ENCODE measurements at regions of chr17 and their contacts with region 1.

Region 1: GRCh38 chr17:2386400-2387085 is 14.3 kb downstream of the MNT start:
- DNase-seq: no peak
- H3K4me3 Mint-ChIP-seq: no peak overlapping the region
- H3K27ac Mint-ChIP-seq: no peak overlapping the region
- H3K4me1 Mint-ChIP-seq: peaks cover 24% of the 10 kb centered on the region
- H3K27me3 Mint-ChIP-seq: no peaks in the 10 kb centered on the region

Region 2: DNA sequence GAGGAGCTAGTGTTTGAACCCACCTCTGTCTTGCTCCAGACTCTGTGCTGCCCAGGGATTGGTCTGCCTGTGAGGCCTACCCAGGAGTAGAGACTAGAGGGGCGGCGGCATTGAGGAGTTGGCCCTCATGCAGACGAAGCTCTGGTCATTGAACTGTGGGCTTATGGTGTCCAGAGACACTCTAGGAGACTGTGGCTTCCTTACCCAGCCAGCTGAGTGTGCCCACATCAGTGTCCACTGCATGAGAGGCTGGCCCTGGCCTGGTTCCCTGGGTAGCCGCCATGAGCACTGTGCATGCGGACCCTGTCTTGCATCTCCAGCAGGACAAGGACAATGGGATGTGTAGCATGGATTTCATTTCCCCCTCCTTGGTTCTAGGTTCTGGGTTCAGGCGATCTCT is 35.3 kb before region 1 on chr17:
- CTCF ChIA-PET with region 1: interaction called, 11 read pairs
- POLR2A ChIA-PET with region 1: no interaction called
- intact Hi-C with region 1: no loop called
- DNase-seq: no peak
- H3K4me3 Mint-ChIP-seq: no peak overlapping the region
- H3K27ac Mint-ChIP-seq: no peak overlapping the region
- H3K4me1 Mint-ChIP-seq: peaks cover 17% of the 10 kb centered on the region
- H3K27me3 Mint-ChIP-seq: no peaks in the 10 kb centered on the region

Region 3: DNA sequence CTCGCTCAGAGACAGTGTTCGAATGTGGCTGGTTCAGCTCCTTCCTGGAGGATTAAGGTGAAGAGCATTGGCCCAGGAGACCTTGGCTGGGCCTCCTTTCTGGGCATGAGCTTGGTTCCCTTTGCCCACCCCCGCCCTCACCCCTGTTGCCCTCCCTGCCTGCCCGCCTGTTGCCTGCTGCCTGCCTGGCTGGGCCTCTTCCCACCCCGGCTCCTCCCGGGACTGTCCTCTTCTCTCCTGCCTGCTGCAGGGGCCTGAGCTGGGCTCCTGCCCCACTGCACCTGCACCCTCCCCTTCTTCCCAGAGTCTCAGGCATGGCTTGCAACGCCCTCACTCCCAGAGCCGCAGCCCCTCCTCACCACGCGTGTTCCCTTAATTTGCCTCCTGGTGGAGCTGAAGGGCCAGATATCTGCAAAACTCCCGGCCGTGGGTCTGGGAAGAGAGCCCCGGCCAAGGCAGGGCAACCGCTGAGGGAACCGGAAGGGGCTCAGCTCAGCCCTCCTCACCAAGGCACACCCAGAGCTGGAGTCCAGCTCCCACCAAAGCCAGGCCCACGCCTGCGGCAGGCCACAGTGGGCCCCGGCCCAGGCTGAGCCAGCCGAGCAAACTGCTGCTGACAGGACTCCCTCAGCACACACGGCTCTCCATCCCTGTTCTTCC is 16.9 kb before region 1 on chr17:
- CTCF ChIA-PET with region 1: interaction called, 22 read pairs
- POLR2A ChIA-PET with region 1: no interaction called
- intact Hi-C with region 1: no loop called
- DNase-seq: no peak
- H3K4me3 Mint-ChIP-seq: no peak overlapping the region
- H3K27ac Mint-ChIP-seq: no peak overlapping the region
- H3K4me1 Mint-ChIP-seq: no peaks in the 10 kb centered on the region
- H3K27me3 Mint-ChIP-seq: no peaks in the 10 kb centered on the region

Region 4: GRCh38 chr17:2406903-2407790 is 20.6 kb after region 1 on chr17:
- CTCF ChIA-PET with region 1: interaction called, 544 read pairs
- POLR2A ChIA-PET with region 1: interaction called, 37 read pairs
- intact Hi-C with region 1: no loop called
- DNase-seq: peak; percentile 49
- H3K4me3 Mint-ChIP-seq: no peak overlapping the region
- H3K27ac Mint-ChIP-seq: peak overlapping the region; percentile 47
- H3K4me1 Mint-ChIP-seq: peaks cover 24% of the 10 kb centered on the region
- H3K27me3 Mint-ChIP-seq: no peaks in the 10 kb centered on the region

Region 5: DNA sequence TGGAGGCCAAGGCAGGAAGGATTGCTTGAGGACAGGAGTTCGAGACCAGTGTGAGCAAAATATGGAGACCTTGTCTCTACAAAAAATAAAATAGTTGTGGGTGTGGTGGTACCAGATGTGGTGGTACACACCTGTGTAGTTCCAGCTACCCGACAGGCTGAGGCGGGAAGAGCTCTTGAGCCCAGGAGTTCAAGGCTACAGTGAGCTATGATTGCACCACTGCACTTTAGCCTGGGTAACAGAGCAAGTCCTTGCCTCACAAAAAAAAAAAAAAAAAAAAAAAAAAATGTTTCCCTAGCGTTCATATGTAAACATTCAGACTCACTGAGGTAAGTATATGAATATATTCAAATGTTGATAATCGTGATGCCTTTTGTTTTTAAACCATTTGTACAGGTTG is 285.5 kb after region 1 on chr17:
- CTCF ChIA-PET with region 1: interaction called, 12 read pairs
- POLR2A ChIA-PET with region 1: no interaction called
- intact Hi-C with region 1: no loop called
- DNase-seq: no peak
- H3K4me3 Mint-ChIP-seq: no peak overlapping the region
- H3K27ac Mint-ChIP-seq: no peak overlapping the region
- H3K4me1 Mint-ChIP-seq: peaks cover 7% of the 10 kb centered on the region
- H3K27me3 Mint-ChIP-seq: no peaks in the 10 kb centered on the region